ENCODE measurements at regions of chr19 and their contacts with region 1.

Region 1: GRCh38 chr19:48713864-48714758 is 5.4 kb downstream of the MAMSTR start:
- DNase-seq: peak; percentile 99
- H3K4me3 ChIP-seq: peak overlapping the region; percentile 74
- H3K27ac ChIP-seq: peak overlapping the region; percentile 33
- H3K4me1 ChIP-seq: peaks cover 22% of the 10 kb centered on the region
- CTCF ChIP-seq: no peak

Region 2: DNA sequence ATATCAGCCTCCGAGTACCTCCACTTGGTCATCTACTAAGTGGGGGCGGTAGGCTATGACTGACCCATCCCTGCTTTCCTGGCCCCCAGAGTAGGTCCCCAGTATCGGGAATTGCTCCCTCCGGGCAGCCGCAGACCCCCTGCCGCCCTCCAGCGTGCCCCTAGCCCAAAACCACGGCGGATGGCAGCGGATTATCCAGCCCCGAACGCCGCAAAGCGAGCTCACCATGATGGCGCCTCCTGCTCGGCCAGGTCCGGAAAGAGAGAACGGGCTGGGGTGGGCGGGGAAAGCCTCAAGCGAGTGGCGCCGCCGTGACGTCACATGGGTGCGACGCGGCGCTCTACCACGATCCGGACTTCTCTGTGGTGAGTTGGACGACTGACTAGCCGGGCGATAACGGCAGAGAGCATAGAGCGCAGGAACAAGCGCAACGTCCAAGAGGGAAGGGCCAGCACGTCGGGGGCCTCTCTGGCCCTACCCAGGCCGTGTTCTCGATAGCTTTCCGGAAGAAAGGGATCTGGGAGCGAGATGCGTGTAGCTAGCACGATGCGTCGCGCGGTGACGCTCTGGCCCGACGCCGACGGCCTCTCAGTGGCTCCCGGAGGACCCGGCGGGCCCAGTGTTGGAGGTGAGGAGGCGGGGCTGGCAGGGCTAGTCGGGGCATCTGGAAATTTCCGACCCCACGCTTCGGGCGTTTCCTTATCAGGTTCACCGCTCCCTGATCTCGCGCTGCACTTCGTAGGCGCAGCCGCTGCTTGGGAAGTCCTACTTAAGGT is 95.0 kb before region 1 on chr19 and contains the starts of genes RPL18 and SPHK2:
- CTCF ChIA-PET with region 1: no interaction called
- POLR2A ChIA-PET with region 1: no interaction called
- intact Hi-C with region 1: loop called (anchors 1 kb)
- DNase-seq: peak; percentile 99
- H3K4me3 ChIP-seq: peak within 1 kb of the TSS; percentile 88
- H3K27ac ChIP-seq: peak within 1 kb of the TSS; percentile 72
- H3K4me1 ChIP-seq: peaks cover 60% of the 10 kb centered on the region
- CTCF ChIP-seq: no peak
- total RNA-seq, gene RPL18: 3,527 and 5,064 TPM in 2 replicates
- total RNA-seq, gene SPHK2: 12.4 and 18.2 TPM in 2 replicates

Region 3: GRCh38 chr19:48660854-48661731 is 53.0 kb before region 1 on chr19:
- CTCF ChIA-PET with region 1: no interaction called
- POLR2A ChIA-PET with region 1: no interaction called
- intact Hi-C with region 1: no loop called
- DNase-seq: peak; percentile 99
- H3K4me3 ChIP-seq: peak overlapping the region; percentile 27
- H3K27ac ChIP-seq: peak overlapping the region; percentile 57
- H3K4me1 ChIP-seq: peaks cover 11% of the 10 kb centered on the region
- CTCF ChIP-seq: no peak

Region 4: DNA sequence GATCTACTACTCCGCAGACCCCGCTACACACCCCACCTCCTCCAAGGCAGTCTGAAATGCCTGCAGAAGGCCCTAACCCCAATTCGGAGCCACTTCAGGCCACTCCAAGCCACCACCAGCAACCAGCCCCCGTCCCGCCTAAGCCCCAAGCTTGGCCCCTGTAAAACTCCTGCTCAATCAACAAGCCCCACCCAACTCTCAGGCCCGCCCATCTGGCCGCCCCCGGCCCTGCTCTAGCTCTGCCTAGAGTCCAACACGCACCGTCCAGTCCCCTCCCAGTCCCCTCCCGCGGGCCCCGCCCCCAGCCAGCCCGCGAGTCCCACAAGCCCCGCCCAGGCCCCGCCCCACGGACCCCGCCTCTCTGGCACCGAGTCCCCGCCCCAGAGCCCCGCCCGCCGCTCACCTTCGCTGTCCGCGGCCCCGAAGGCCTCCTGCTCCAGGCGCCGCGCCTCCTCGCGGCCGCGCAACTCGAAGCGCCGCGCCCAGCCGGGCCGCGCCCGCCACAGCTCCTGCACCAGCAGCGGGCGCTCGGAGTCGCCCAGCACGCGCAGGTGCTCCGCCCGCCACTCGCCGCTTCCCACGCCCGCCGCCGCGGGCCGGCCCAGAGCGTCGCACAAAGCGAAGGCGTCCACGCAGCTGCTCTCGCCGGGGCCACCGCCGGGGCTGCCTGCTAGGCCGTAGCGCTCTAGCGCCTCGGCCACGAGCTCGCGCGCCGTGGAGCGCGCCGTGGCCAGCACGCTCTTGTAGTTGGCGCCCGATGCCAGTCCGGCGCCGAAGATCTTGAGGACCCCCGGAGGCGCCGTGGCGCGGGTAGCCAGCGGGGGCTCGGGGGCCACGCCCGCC is 24.7 kb after region 1 on chr19:
- CTCF ChIA-PET with region 1: no interaction called
- POLR2A ChIA-PET with region 1: no interaction called
- intact Hi-C with region 1: loop called (anchors 2 kb)
- DNase-seq: peak; percentile 87
- H3K4me3 ChIP-seq: no peak overlapping the region
- H3K27ac ChIP-seq: no peak overlapping the region
- H3K4me1 ChIP-seq: peaks cover 20% of the 10 kb centered on the region
- CTCF ChIP-seq: peak; percentile 53; the same call in 1 of the 2 replicates